Activated CD4-positive, alpha-beta T cell treated with anti-CD3 and anti-CD28 coated beads, Interleukin-2, amount 10 ng/mL, durations not matched to agents 24 days and 14 days (primary cell): ENCODE measurements at regions of chr12 and their contacts with region 1.

Region 1: DNA sequence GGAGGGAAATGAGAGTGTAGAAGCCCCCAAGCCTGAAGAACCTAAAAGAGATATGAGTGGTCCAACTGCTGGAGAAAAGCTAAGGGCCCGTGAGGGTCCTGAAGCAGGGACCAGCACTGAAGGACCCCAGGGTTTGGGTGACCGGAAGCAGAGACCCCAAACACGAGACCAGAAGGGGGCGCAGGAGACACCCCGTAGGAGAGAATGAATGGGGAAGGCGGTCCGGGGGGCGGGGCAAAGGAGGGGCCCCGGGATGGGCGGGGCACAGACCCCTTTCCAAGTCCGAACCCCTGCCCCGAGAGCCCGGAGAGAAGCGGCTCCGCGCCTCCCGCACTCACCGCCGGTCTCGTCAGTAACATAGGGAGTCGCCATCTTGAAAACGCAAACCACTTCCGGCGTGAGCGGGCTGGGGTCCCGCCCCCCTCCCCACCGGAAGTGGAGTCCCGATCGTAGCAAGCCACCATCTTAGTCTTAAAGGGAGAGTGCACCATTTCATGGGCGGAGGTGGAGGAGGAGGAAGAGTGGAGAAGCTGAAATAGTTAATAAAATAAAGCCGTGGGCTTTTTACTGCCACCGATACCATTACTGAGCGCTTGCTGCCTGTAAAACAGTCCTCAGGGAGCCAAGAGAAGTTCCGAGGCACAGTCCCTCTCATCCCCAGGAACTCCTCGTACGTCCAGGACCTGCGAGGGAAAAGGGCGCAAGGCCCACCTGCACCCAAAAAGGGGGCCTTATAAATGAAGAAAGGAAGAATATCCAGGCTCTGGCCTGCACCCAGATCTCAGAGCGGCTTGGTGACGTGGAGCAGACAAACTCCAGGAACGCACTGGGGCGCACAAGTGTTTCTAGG is 731 bp downstream of the PYM1 start:
- DNase-seq: peak; percentile 96
- H3K4me3 Mint-ChIP-seq: peak overlapping the region; percentile 99
- H3K27ac Mint-ChIP-seq: peak overlapping the region; percentile 98
- H3K4me1 Mint-ChIP-seq: peaks cover 40% of the 10 kb centered on the region
- H3K27me3 Mint-ChIP-seq: peaks cover 2% of the 10 kb centered on the region

Region 2: DNA sequence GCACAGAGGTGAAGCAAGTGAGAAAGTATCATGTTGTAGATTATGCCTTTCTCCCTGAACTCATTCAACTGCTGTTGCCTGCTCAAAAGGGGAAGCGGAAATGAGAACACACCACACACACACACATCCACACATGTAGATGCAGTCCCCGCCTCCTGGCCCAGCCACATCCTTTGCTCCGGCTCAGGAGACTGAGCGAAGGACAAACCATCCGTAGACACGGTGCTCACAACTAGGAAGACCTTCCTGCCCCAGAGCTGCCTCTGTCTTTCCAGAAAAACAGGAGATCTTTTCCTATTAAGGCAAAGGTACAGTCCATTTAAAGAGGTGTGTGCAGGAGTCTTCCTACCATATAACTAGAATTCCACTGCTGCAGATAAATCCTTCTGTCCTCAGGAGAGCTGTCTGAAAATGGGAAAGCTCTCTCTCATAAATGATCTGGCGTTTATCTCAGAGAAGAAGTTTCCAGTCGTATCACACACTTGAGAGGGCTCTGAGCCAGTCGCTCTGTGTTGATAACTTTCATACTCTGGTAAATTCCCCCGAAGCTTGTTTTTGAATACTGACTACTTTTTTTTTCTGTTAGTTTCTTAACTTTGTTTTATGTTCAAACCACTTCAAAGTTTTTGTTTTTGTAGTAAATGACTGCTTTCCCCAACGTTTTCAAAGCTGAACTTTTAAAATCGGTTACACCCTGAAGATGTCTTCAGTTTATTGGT is 942.1 kb before region 1 on chr12 and contains the start of gene TESPA1:
- intact Hi-C with region 1: loop called (anchors 10 kb)
- DNase-seq: peak; percentile 95
- H3K4me3 Mint-ChIP-seq: peak within 1 kb of the TSS; percentile 86
- H3K27ac Mint-ChIP-seq: peak within 1 kb of the TSS; percentile 97
- H3K4me1 Mint-ChIP-seq: peaks cover 61% of the 10 kb centered on the region
- H3K27me3 Mint-ChIP-seq: no peaks in the 10 kb centered on the region
- total RNA-seq, gene TESPA1: 164 and 168 TPM in 2 replicates

Region 3: GRCh38 chr12:55738123-55739024 is 188.6 kb before region 1 on chr12:
- intact Hi-C with region 1: loop called (anchors 2 kb)
- DNase-seq: peak; percentile 96
- H3K4me3 Mint-ChIP-seq: peak overlapping the region; percentile 88
- H3K27ac Mint-ChIP-seq: peak overlapping the region; percentile 85
- H3K4me1 Mint-ChIP-seq: peaks cover 31% of the 10 kb centered on the region
- H3K27me3 Mint-ChIP-seq: peaks cover 4% of the 10 kb centered on the region

Region 4: GRCh38 chr12:55899082-55899481 is 27.9 kb before region 1 on chr12:
- intact Hi-C with region 1: loop called (anchors 1 kb)
- DNase-seq: no peak
- H3K4me3 Mint-ChIP-seq: no peak overlapping the region
- H3K27ac Mint-ChIP-seq: peak overlapping the region; percentile 45
- H3K4me1 Mint-ChIP-seq: peaks cover 9% of the 10 kb centered on the region
- H3K27me3 Mint-ChIP-seq: no peaks in the 10 kb centered on the region

Region 5: GRCh38 chr12:55973598-55974307 is 46.8 kb after region 1 on chr12 and contains the start of gene RAB5B:
- intact Hi-C with region 1: loop called (anchors 1 kb)
- DNase-seq: peak; percentile 99
- H3K4me3 Mint-ChIP-seq: no peak within 1 kb of the TSS
- H3K27ac Mint-ChIP-seq: no peak within 1 kb of the TSS
- H3K4me1 Mint-ChIP-seq: peaks cover 28% of the 10 kb centered on the region
- H3K27me3 Mint-ChIP-seq: no peaks in the 10 kb centered on the region
- total RNA-seq, gene RAB5B: 39.0 and 40.2 TPM in 2 replicates

Region 6: DNA sequence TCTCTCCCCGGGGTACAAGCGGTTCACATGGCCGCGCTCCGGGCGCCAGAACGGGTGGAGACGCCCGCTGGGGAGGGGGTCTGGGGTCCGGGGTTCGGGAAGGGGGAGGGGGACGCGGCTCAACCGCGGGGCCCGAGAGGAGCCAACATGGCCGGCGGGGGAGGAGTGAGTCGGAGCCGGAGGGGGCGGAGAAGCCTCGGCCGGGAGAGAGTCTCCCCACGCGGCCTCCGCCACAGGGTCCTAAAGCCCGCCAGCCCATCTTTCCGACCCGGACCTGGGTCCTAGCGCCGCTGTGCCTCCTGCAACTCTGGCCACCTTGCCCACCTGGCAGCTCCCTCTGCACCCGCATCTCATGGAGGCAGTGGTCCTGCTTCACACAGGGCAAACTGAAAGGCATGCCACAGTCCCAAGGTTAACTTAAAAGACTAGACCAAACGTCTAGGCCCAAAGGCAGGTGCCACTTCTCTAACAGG is 703.2 kb after region 1 on chr12 and contains the start of gene BAZ2A:
- intact Hi-C with region 1: loop called (anchors 2 kb)
- DNase-seq: peak; percentile 96
- H3K4me3 Mint-ChIP-seq: peak within 1 kb of the TSS; percentile 98
- H3K27ac Mint-ChIP-seq: peak within 1 kb of the TSS; percentile 97
- H3K4me1 Mint-ChIP-seq: peaks cover 66% of the 10 kb centered on the region
- H3K27me3 Mint-ChIP-seq: no peaks in the 10 kb centered on the region
- total RNA-seq, gene BAZ2A: 117 and 118 TPM in 2 replicates